Posterior vena cava (tissue), 2 donors: ENCODE measurements at regions of chr1 and their contacts with region 1.

Region 1: GRCh38 chr1:26602378-26602959 is 72.9 kb downstream of the RPS6KA1 start:
- DNase-seq: no peak

Region 2: GRCh38 chr1:26787706-26788514 is 185.4 kb after region 1 on chr1 and contains the start of gene PIGV:
- intact Hi-C with region 1: loop called (anchors 2 to 5 kb)
- DNase-seq: peak; percentile 96
- total RNA-seq, gene PIGV: 6.3 to 7.9 TPM

Region 3: GRCh38 chr1:26889551-26890466 is 287.3 kb after region 1 on chr1 and contains the start of gene GPN2:
- intact Hi-C with region 1: loop called in 1 of 2 experiments (anchors 10 kb)
- DNase-seq: peak; percentile 93
- total RNA-seq, gene GPN2: 17.7 to 19.4 TPM